ENCODE measurements at regions of chr10 and their contacts with region 1.

Region 1: DNA sequence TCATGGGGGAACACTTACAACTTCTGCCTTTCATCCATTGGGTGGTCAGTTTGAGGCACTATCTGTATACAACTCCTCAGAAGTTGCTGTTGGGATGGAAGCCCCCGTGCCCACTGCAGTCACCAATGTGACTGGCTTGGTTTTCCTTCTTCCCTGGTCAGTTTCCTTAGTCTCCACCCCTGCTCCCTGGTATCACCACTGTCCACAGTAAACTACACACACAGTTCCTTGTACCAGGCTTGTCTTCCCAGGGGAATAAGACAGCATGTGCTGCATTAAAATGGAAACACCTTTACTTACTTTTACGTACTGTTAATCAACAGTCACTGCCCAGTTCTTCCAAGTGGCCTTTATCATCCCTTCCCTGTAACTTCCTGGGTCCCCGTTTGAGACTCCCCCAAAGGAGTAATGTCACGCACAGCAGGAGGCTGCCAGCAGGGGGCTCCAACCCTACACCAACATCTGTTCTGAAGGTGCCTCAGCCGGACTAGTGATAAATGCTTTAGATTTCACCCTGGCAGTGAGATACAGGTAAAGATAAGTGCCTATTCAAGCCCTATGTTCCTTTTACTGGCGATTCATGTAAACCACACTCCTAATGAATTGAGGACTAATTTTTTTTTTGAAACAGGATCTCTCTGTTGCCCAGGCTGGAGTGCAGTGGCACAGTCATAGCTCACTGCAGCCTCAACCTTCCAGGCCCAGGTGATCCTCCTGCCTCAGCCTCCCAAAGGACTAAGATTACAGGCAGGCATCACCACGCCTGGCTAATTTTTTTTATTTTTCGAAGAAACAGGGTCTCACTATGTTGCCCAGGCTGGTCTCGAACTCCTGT is 45.3 kb upstream of the PIK3AP1 start:
- DNase-seq: peak; percentile 44
- ATAC-seq: peak; percentile 93
- H3K4me3 ChIP-seq: no peak overlapping the region
- H3K27ac ChIP-seq: no peak overlapping the region
- H3K4me1 ChIP-seq: no peaks in the 10 kb centered on the region
- H3K27me3 ChIP-seq: peaks cover 7% of the 10 kb centered on the region
- CTCF ChIP-seq: peak; percentile 81
- POLR2A ChIP-seq: no peak
- RAD21 ChIP-seq: peak; percentile 83

Region 2: DNA sequence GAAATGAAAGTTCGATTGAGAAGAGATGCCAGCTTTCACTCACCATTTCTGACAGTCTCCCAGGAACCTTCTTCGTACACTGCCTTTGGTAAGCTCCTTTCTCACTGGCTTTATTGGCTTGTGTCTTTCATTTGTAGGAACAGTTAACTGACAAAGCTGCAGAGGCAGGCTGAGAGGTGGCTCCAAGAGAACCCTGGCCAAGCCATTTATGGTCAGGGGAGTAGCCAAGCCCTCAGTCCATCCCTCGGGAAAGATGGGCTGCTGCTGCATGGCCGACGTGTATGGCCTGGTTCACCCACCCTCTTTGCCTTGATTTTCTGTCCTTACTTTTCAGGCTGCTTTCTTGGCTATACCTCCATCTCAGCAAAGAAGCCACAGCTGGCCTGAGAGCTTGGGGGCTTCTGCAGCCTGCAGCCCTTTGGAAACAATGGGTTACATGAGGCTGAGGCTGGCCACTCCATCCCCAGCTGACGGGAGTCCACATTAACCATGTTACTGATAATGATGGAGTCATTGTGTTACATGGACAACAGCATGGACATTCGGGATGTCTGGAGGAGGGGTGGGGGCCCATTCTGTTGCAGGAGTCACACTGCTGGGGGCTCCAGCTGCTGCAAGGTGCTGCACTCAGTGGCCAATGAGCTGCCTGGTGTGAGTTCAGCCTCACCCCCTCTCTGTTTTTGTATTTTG is 406.6 kb before region 1 on chr10 and contains the start of gene OPALIN:
- CTCF ChIA-PET with region 1: no interaction called
- POLR2A ChIA-PET with region 1: no interaction called
- dilution Hi-C with region 1: no loop called
- in situ Hi-C with region 1: no loop called
- intact Hi-C with region 1: no loop called
- DNase-seq: no peak
- ATAC-seq: no peak
- H3K4me3 ChIP-seq: no peak within 1 kb of the TSS
- H3K27ac ChIP-seq: no peak within 1 kb of the TSS
- H3K4me1 ChIP-seq: no peaks in the 10 kb centered on the region
- H3K27me3 ChIP-seq: peaks cover 1% of the 10 kb centered on the region
- CTCF ChIP-seq: no peak
- POLR2A ChIP-seq: no peak
- RAD21 ChIP-seq: no peak
- total RNA-seq, gene OPALIN: not detected in 2 replicates

Region 3: GRCh38 chr10:97355571-97355975 is 590.0 kb after region 1 on chr10:
- CTCF ChIA-PET with region 1: no interaction called
- POLR2A ChIA-PET with region 1: no interaction called
- dilution Hi-C with region 1: no loop called
- in situ Hi-C with region 1: no loop called
- intact Hi-C with region 1: loop called (anchors 10 kb)
- DNase-seq: no peak
- ATAC-seq: peak; percentile 27; the same call in 1 of the 2 replicates
- H3K4me3 ChIP-seq: no peak overlapping the region
- H3K27ac ChIP-seq: no peak overlapping the region
- H3K4me1 ChIP-seq: no peaks in the 10 kb centered on the region
- H3K27me3 ChIP-seq: no peaks in the 10 kb centered on the region
- CTCF ChIP-seq: peak; percentile 31
- POLR2A ChIP-seq: no peak
- RAD21 ChIP-seq: peak; percentile 37

Measured in IMR-90 (cell line).